Dendritic cell treated with granulocyte-macrophage colony-stimulating factor and Interleukin-4, amounts not matched to agents 40 ng/mL and 50 ng/mL, for 4 days (primary cell): ENCODE measurements at regions of chr16 and their contacts with region 1.

Region 1: DNA sequence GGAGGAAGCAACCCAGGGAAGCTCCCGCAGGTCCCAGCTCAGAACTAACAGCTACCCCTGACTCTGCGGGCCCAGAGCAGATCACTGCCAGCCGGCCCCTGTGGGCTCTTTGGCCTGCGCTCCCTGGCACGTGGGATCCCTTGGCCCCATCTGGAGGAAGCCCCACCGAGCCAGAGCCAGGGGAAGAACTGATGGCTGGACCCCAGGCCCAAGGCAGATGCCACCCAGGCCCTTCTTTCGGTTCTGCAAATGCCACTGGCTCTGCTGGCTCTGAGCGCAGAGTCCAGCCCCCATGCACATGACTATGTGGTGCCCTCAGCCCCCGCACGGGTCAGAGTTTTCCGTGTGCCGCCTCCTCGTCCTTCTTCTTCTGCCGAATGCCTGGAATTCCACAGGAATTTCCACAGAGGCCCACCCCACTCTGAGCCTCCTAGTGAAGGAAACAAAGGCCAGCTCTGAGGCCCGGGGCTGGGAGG is 35.8 kb upstream of the SNN start:
- H3K4me3 Mint-ChIP-seq: no peak overlapping the region
- H3K27ac Mint-ChIP-seq: peak overlapping the region; percentile 80
- H3K4me1 Mint-ChIP-seq: peaks cover 89% of the 10 kb centered on the region
- H3K27me3 Mint-ChIP-seq: peaks cover 18% of the 10 kb centered on the region

Region 2: DNA sequence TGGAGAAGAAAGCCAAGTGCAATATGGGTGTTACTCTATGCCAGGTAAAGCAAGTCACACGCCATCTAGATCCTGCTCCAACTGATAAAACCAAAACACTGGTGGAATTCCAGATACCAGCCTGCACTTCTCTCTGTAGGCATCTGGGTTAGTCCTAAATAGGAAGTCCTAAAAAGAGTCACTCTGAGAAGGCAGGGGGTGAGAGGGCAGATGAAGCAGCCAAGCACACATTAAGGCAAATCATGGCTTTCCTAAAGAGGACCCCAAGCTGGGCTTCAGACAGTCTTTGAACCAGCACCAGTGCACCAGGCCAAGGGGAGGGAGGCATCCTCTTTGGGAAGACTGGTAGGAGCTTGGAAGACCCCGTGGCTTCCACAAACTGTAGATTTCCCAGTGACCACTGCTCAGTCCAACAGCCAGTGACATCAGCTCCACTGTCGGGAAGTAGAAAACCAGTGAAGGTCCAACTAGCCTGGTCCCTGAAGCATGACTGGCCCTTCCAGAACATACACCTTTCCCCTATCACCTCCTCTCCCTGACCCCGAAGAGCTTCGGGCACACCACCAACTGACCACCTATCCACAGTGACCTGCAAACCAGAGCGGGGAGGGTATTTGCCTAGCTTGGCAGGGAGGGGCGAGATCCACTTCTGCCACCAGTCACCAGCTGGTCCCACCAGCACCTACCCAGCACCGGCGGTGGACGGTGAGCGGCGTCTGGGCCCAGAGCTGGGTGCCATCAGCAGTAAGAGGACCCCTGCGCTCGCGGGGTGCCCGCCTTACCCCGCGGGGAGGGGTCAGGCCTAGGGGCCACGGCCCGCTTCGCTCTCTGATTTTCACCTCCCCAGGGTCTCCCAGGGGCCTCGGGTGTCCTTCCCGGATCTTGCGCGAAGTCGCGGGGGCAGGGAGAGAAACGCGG is 46.8 kb before region 1 on chr16:
- intact Hi-C with region 1: loop called (anchors 5 kb)
- H3K4me3 Mint-ChIP-seq: peak overlapping the region; percentile 88
- H3K27ac Mint-ChIP-seq: peak overlapping the region; percentile 89
- H3K4me1 Mint-ChIP-seq: peaks cover 69% of the 10 kb centered on the region
- H3K27me3 Mint-ChIP-seq: peaks cover 26% of the 10 kb centered on the region

Region 3: GRCh38 chr16:11597239-11598101 is 35.0 kb before region 1 on chr16:
- intact Hi-C with region 1: loop called (anchors 5 kb)
- H3K4me3 Mint-ChIP-seq: no peak overlapping the region
- H3K27ac Mint-ChIP-seq: peak overlapping the region; percentile 76
- H3K4me1 Mint-ChIP-seq: peaks cover 53% of the 10 kb centered on the region
- H3K27me3 Mint-ChIP-seq: no peaks in the 10 kb centered on the region

Region 4: GRCh38 chr16:11613381-11614303 is 18.9 kb before region 1 on chr16:
- intact Hi-C with region 1: loop called (anchors 1 kb)
- H3K4me3 Mint-ChIP-seq: peak overlapping the region; percentile 21
- H3K27ac Mint-ChIP-seq: peak overlapping the region; percentile 91
- H3K4me1 Mint-ChIP-seq: peaks cover 69% of the 10 kb centered on the region
- H3K27me3 Mint-ChIP-seq: peaks cover 9% of the 10 kb centered on the region